ENCODE measurements at regions of chr11 and their contacts with region 1.

Region 1: DNA sequence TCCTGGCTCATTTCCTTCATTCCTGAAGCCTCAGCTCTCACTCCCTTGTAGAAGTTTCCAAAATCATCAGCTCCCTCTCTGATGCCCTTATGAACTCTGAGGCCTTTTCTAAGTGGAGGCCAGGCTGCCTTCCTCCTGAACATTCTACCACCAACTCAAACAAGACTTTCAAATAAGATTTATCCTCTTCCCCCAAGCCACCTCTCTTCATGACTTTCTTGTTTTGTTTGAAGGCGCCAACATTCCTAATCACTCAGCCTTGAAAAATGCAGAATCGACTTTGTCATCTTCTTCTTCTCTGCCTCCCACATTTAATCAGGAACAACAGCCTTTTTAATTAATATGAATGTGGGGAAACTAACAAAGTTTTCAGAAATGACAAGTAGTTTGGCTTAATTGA is 927.9 kb downstream of the OPCML start:
- DNase-seq: no peak
- H3K4me3 ChIP-seq: no peak overlapping the region
- H3K27me3 ChIP-seq: no peaks in the 10 kb centered on the region
- CTCF ChIP-seq: no peak

Region 2: DNA sequence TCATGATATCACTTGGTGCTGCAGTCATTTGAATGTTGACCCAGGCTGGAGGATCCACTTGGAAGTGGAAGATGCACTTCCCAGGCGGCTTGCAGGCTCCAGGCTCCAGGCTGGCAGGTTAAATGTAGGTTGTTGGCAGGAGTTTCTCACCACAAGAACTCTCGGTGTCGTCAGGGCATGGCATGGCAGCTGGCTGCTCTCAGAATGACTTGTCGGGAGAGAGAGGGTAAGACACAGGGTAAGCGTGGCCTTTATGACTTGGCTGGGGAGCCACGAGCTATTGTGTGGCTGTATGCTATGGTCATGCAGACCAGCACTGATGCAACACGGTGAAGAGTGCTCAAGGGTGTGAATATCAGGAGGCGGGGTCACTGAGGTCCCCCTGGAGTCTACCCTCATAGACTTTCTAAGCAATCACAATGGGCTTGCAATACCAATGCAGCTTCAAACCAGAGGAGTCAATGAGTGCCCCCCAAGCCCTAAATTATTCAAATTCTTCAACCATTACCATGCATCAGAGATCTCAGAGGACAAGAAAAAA is 99.9 kb before region 1 on chr11:
- CTCF ChIA-PET with region 1: no interaction called
- POLR2A ChIA-PET with region 1: no interaction called
- DNase-seq: no peak
- H3K4me3 ChIP-seq: no peak overlapping the region
- H3K27me3 ChIP-seq: no peaks in the 10 kb centered on the region; the same call in 1 of the 2 replicates
- CTCF ChIP-seq: no peak

Region 3: DNA sequence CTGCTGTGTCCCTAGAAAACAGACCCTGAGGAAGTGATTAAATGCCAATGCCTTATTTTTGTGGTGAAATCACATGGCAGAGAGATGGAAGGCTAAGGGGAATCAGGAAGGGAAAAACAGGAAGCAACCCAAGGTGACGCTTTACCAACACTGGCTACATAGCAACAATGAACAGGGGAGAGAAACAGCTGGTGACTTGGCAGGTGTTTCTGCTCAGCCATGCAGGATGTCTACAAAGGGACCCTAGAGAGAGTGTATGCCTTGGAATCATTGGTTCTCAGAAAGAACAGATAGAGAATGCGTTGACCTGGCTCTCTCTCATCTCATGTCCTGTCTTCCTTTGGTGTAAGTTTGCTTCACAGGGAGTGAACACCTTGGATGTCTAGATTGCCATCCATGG is 16.0 kb after region 1 on chr11:
- CTCF ChIA-PET with region 1: no interaction called
- POLR2A ChIA-PET with region 1: no interaction called
- DNase-seq: no peak
- H3K4me3 ChIP-seq: no peak overlapping the region
- H3K27me3 ChIP-seq: no peaks in the 10 kb centered on the region
- CTCF ChIP-seq: no peak

Region 4: GRCh38 chr11:132631989-132632388 is 27.6 kb after region 1 on chr11:
- CTCF ChIA-PET with region 1: interaction called, 3 read pairs
- POLR2A ChIA-PET with region 1: interaction called, 23 read pairs
- DNase-seq: peak; percentile 28
- H3K4me3 ChIP-seq: no peak overlapping the region
- H3K27me3 ChIP-seq: no peaks in the 10 kb centered on the region
- CTCF ChIP-seq: no peak

Measured in BJ (cell line).